ENCODE measurements at regions of chr12 and their contacts with region 1.

Region 1: DNA sequence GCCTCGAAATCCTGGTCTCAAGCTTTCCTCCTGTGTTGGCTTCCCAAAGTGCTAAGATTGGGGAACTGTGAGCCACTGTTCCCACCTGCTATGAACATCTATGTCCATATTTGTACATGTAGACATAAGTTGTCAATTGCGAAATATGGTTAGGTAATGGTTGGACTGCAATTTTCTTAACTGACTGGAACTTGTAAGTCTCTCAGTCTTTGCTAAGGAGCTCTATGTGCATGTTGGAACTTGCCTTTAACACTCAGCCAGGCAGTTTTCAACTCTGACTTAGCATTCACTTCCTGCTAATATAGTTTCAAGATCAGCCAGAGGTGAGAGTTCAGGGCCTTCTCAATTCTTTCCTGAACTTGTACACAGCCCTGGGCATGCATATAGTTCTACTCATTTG is 44.5 kb upstream of the EEA1 start:
- DNase-seq: peak; percentile 50
- H3K4me3 ChIP-seq: no peak overlapping the region
- H3K4me3 Mint-ChIP-seq: no peak overlapping the region
- H3K27ac Mint-ChIP-seq: peak overlapping the region; percentile 53
- H3K4me1 ChIP-seq: peaks cover 20% of the 10 kb centered on the region
- H3K4me1 Mint-ChIP-seq: peaks cover 7% of the 10 kb centered on the region
- H3K27me3 ChIP-seq: no peaks in the 10 kb centered on the region
- H3K27me3 Mint-ChIP-seq: no peaks in the 10 kb centered on the region
- CTCF ChIP-seq: no peak

Region 2: DNA sequence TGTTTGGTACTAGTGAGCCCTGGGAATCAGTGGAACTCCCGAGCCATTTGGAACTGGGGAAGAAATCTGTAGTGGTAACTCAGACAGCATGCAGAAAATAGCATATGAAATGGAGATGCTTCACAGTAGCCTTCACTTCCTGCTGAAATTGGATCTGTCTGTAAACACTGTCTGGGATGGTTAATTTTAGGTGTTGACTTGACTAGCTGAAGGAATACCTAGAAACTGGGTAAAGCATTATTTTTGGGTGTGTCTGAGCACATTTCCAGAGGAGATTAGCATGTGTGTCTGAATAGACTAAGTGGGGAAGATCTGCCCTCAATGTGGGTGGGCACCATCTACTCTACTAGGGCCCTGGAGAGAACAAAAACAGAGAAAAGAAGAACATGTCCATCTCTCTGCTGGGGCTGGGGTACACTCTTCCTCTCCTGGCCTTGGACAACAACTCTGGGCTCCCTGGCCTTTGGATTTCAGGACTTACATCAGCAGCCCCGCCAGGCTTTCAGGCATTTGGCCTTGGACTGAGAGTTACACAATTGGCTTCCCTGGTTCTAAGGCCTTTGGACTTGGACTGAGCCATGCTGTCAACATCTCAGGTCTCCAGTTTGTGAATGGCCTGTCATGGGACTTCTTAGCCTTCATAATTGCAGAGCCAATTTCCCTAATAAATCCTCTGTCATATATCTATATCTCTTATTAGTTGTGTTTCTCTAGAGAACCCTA is 689.6 kb after region 1 on chr12:
- CTCF ChIA-PET with region 1: interaction called, 10 read pairs
- POLR2A ChIA-PET with region 1: interaction called, 3 read pairs
- intact Hi-C with region 1: no loop called
- DNase-seq: peak in 1 of 2 experiments; percentile 22
- H3K4me3 ChIP-seq: no peak overlapping the region
- H3K4me3 Mint-ChIP-seq: no peak overlapping the region
- H3K27ac Mint-ChIP-seq: no peak overlapping the region
- H3K4me1 ChIP-seq: peaks cover 9% of the 10 kb centered on the region; the same call in 1 of the 2 replicates
- H3K4me1 Mint-ChIP-seq: no peaks in the 10 kb centered on the region
- H3K27me3 ChIP-seq: no peaks in the 10 kb centered on the region
- H3K27me3 Mint-ChIP-seq: no peaks in the 10 kb centered on the region
- CTCF ChIP-seq: no peak

Region 3: DNA sequence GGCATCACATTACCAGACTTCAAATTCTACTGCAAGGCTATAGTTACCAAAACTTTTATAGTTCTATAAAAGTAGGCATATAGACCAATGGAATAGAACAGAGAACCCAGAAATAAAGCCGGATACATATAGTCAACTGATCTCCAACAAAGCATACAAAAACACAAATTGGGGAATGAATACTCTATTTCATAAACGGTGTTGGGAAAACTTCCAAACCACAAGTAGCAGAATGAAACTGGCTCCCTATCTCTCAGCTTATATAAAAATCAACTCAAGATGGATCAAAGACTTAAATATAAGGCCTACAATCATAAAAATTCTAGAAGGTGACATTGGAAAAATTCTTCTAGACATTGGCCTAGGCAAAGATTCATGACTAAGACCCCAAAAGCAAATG is 986.9 kb after region 1 on chr12:
- CTCF ChIA-PET with region 1: no interaction called
- POLR2A ChIA-PET with region 1: no interaction called
- intact Hi-C with region 1: no loop called
- DNase-seq: no peak
- H3K4me3 ChIP-seq: no peak overlapping the region
- H3K4me3 Mint-ChIP-seq: no peak overlapping the region
- H3K27ac Mint-ChIP-seq: no peak overlapping the region
- H3K4me1 ChIP-seq: no peaks in the 10 kb centered on the region
- H3K4me1 Mint-ChIP-seq: no peaks in the 10 kb centered on the region
- H3K27me3 ChIP-seq: no peaks in the 10 kb centered on the region
- H3K27me3 Mint-ChIP-seq: no peaks in the 10 kb centered on the region
- CTCF ChIP-seq: no peak

Measured in Caco-2 (cell line).